BJ (cell line): ENCODE measurements at regions of chr9 and their contacts with region 1.

Region 1: DNA sequence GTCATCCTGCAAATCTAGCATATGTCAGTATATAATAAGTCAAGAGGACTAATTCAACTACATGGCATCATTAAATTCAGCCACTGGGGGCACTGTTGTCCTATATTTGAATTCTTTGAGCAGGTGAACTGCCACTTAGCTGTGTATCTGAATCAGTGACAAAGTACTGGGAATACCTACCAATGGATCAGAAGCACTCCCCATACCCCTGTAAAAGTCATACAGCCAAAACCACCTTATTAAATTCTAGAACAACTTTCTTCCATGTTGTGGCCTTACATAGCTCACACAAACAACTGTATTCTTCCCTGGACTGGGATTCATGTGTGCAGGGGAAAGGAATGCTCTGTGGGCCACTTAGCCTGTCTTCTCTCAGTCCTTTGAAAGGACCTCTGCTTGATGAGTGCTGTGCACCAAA is 57.4 kb upstream of the PLPP6 start:
- DNase-seq: peak; percentile 13
- H3K4me3 ChIP-seq: no peak overlapping the region
- H3K27me3 ChIP-seq: peaks cover 1% of the 10 kb centered on the region; the same call in 1 of the 2 replicates
- CTCF ChIP-seq: peak; percentile 57

Region 2: DNA sequence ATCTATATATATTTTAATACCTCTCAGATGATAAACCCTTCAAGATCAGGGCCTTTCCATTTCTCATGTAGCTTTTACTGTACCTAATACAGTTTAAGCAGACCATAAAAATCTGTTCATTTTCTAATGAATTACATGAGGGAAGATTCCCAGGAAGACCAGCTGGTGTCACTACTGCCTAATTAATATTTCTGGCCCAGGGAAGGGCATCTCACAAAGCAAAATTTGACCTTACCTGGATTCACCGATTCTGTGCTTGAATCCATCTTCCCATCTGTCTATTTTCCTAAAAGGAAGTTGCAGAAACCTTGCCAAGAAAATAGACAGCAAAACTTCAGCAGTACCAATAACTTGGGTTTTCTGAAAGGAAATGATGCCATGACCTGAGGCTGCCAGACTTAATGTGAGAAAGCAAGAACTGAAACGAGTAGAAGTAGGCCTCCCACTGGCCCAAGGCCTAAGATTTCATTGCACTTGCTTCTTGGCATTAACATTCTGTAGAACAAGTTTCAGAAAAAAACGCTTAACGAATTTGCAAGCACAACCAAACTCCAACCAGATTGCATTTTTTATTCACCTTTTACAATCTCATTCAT is 221.9 kb before region 1 on chr9:
- CTCF ChIA-PET with region 1: interaction called, 10 read pairs
- POLR2A ChIA-PET with region 1: no interaction called
- DNase-seq: no peak
- H3K4me3 ChIP-seq: no peak overlapping the region
- H3K27me3 ChIP-seq: no peaks in the 10 kb centered on the region; the same call in 1 of the 2 replicates
- CTCF ChIP-seq: peak; percentile 55

Region 3: DNA sequence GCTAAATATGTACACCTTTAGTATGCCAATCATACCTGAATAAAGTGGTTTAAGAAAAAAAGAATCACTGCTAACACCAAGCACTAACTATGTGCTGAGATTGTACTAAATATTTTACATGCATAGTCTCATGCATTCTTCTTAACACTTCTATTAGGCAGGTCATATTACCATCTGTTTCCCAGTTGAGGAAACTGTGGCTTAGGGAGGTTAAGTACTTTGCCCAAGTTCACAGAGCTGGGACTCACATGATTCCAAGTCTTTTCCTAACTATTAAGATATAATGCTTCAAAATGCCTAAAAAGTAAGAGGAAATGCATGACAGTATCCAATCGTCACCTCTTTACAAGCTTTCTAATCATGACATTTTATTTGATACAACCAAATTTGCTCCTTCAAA is 11.8 kb before region 1 on chr9:
- CTCF ChIA-PET with region 1: interaction called, 18 read pairs
- POLR2A ChIA-PET with region 1: no interaction called
- DNase-seq: no peak
- H3K4me3 ChIP-seq: no peak overlapping the region
- H3K27me3 ChIP-seq: no peaks in the 10 kb centered on the region
- CTCF ChIP-seq: no peak

Region 4: DNA sequence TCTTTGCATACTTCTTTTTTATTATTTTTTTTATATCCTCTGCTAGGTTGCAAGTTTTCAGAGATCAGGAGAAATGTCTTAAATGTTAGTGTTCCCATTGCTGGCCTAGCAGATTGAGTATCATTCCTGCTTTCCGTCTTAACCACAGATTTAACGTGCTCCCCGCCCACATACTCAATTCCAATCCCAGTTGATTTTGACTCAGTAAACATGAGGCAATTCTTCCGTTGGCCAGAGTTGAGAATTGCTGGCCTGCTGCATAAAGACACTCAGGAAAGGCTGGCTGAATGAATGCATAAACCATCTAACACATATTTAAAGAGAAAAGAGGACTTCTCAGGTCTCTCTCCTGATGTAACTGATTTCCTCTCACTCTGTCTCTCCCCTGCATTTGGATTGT is 10.6 kb after region 1 on chr9:
- CTCF ChIA-PET with region 1: interaction called, 10 read pairs
- POLR2A ChIA-PET with region 1: no interaction called
- DNase-seq: peak; percentile 44
- H3K4me3 ChIP-seq: no peak overlapping the region
- H3K27me3 ChIP-seq: 0 out of 2 replicates have a peak, but pooled peaks cover 1% of the 10 kb centered on the region
- CTCF ChIP-seq: no peak

Region 5: GRCh38 chr9:4640027-4640426 is 35.3 kb after region 1 on chr9:
- CTCF ChIA-PET with region 1: interaction called, 16 read pairs
- POLR2A ChIA-PET with region 1: no interaction called
- DNase-seq: no peak
- H3K4me3 ChIP-seq: no peak overlapping the region
- H3K27me3 ChIP-seq: no peaks in the 10 kb centered on the region
- CTCF ChIP-seq: peak; percentile 52

Region 6: DNA sequence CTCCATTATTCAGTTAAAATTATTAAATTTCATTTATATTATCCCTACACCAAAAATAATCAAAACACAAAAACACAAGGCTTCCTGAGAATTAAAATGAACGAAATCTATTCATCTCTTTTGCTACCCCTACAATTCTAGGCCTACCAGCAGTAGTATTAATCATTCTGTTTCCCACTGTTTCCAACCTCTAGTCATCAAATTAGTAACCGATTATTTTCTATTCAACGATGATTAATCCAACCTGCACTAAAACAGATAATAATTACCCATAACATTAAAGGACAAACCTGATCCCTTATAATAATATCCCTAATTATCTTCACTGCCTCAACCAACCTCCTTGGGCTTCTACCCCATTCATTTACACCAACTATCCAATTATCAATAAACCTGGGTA is 494.8 kb after region 1 on chr9:
- CTCF ChIA-PET with region 1: no interaction called
- POLR2A ChIA-PET with region 1: no interaction called
- DNase-seq: no peak
- H3K4me3 ChIP-seq: no peak overlapping the region
- H3K27me3 ChIP-seq: no peaks in the 10 kb centered on the region
- CTCF ChIP-seq: no peak